AG04449 (cell line): ENCODE measurements at regions of chr1 and their contacts with region 1.

Region 1: DNA sequence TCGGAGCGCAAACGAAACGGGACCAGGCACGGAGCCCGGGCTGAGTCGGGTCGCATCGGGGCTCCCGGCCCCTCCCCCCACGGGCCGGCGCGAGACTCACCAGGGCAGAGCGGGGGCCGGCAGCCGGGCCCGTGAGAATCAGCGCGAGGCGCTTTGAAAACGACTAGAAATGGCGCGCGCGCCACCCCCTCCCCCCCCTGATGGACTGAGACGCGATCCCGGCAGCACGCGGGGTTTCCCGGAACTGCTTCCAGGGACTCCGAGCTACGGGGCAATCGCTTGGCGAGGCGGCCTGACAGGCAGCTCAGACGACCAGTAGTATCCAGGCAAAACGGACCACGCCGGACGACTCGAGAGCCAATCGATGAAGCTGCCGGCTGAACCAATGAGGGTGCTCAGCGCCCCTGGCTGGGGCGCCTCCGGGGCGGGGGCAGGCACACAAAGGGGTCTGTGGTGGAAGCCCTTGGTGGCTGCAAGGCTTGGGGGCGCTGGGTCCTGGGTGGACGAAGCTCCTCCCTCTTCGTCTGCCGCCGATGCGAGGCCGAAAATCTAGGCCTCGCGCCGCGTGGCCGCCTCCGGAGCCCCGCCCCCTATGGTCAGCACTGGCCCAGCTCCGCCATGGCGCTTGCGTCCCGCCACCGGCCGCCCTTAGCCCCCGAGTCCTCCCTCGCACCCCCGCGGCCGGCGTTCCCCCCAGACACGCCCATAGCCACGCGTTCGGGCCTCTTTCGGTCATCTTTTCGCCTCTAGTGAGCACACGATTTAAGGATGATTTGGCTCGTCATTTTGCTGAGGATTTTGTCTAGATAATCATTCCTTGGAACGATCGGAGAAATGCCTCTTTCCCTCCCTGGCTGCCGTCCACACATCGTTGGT is at the start of gene HNRNPR:
- DNase-seq: peak; percentile 100
- H3K4me3 ChIP-seq: peak within 1 kb of the TSS; percentile 63
- CTCF ChIP-seq: no peak

Region 2: GRCh38 chr1:23367791-23368561 is 23.6 kb after region 1 on chr1:
- CTCF ChIA-PET with region 1: interaction called, 3 read pairs
- POLR2A ChIA-PET with region 1: interaction called, 30 read pairs
- DNase-seq: peak; percentile 89
- H3K4me3 ChIP-seq: peak overlapping the region; percentile 90
- CTCF ChIP-seq: no peak

Region 3: GRCh38 chr1:23394684-23395083 is 50.3 kb after region 1 on chr1:
- CTCF ChIA-PET with region 1: no interaction called
- POLR2A ChIA-PET with region 1: interaction called, 11 read pairs
- DNase-seq: peak; percentile 42
- H3K4me3 ChIP-seq: no peak overlapping the region
- CTCF ChIP-seq: peak; percentile 4

Region 4: DNA sequence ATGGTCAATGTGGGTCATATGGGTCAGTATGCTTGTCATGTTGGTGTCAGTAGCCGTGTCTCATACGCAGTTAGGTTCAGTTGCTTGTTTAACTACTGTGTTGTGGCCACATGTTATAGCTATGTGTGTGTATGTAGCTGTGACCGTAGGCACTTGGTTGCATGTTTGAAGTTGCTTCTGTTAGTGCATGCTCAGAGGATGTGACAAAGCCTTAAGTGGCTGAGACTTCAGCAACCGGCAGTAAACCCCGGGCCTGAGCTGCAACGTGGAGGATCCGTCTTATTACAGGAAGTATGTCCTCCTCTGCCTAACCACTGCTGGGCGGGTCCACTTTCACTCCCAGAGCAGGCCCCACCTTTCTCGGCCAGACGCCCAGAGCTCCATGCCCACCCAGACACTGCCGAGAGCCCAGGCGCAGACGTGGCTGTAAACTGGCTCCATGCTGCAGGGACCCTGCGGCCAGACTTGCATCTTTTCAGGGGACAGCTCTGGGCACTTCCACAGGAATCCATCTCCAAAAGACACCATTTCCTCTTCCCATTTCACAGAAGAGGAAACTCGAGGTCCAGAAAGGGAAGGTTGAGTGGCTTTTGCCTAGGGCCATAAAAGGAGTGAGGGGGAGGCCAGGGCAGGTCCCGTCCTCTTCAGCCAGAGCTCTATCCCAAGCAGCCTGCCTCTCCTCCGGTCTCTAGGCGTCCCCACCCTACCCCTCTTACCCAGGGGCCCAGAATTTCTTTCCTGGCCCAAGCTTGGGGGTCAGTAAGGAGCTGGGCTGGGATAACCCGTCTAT is 78.1 kb after region 1 on chr1:
- CTCF ChIA-PET with region 1: interaction called, 5 read pairs
- POLR2A ChIA-PET with region 1: interaction called, 11 read pairs
- DNase-seq: peak; percentile 54
- H3K4me3 ChIP-seq: peak overlapping the region; percentile 70
- CTCF ChIP-seq: no peak